Activated CD4-positive, alpha-beta T cell treated with anti-CD3 and anti-CD28 coated beads for 36 hours (primary cell): ENCODE measurements at regions of chr10 and their contacts with region 1.

Region 1: DNA sequence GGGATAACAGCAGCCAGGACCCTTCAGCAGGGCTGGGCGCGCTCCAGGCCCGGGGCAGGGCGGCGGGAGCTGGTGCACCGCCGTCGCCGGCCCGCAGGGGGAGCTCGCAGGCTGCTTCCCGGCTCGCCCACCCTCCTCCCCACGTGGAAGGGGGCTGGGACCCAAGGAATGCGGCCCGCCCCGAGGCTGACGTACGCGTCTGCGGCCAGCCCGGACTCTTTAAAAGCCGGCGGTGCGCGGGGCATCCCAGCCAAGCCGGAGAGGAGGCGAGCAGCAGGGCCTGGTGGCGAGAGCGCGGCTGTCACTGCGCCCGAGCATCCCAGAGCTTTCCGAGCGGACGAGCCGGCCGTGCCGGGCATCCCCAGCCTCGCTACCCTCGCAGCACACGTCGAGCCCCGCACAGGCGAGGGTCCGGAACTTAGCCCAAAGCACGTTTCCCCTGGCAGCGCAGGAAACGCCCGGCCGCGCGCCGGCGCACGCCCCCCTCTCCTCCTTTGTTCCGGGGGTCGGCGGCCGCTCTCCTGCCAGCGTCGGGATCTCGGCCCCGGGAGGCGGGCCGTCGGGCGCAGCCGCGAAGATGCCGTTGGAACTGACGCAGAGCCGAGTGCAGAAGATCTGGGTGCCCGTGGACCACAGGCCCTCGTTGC is at the start of gene PFKFB3:
- DNase-seq: peak; percentile 98
- ATAC-seq: peak; percentile 64
- H3K4me3 Mint-ChIP-seq: peak within 1 kb of the TSS; percentile 89
- H3K27ac Mint-ChIP-seq: peak within 1 kb of the TSS; percentile 95
- H3K4me1 Mint-ChIP-seq: peaks cover 43% of the 10 kb centered on the region
- H3K27me3 Mint-ChIP-seq: no peaks in the 10 kb centered on the region
- total RNA-seq, gene PFKFB3: 133 to 183 TPM

Region 2: DNA sequence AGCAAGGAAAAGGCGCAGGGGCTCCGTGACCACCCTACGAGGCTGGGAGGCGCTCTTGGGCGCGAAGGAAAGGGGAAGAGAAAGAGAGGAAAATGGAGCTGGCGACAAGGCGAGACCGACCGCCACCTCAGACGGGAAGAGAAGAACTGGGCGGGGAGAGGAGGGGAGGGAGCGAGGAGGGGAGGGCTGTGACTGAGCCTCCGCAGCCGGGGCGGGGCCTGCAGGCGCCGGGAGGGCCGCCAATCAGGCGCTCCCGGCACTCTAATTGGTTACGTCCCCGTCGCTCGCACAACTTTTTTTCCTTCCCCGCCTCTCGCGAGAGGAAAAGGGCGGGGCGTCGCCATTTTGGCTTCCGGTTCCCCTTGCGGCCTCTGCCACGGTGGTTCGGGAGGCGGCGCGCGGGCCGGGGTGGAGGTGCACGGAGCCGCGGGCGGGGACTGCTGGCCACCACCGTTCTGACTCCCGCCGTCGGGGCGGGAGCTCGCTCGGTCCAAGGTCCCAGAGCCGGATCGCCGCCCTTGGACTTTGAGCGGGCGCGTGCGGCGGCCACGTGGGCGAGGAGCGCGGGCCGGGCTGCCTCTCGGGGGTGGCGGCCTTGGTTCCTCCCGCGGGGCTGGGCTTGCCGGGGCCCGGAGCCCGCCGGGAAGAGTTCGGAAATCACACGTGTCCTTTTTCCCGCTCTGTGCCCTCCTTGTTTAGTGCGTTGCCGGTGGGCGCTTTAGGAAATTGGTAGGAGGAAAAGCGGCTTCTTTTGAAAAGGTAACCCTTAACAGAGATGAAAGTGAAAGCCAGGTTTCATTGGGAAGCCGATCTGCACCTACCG is 389.3 kb before region 1 on chr10 and contains the start of gene GDI2:
- CTCF ChIA-PET with region 1: no interaction called
- POLR2A ChIA-PET with region 1: no interaction called
- intact Hi-C with region 1: loop called in 1 of 2 experiments (anchors 2 kb)
- DNase-seq: peak; percentile 98
- ATAC-seq: peak; percentile 94
- H3K4me3 Mint-ChIP-seq: peak within 1 kb of the TSS; percentile 92
- H3K27ac Mint-ChIP-seq: peak within 1 kb of the TSS; percentile 98
- H3K4me1 Mint-ChIP-seq: peaks cover 60% of the 10 kb centered on the region
- H3K27me3 Mint-ChIP-seq: no peaks in the 10 kb centered on the region
- total RNA-seq, gene GDI2: 276 to 290 TPM

Region 3: GRCh38 chr10:6088721-6089390 is 114.0 kb before region 1 on chr10 and contains the start of gene RBM17:
- CTCF ChIA-PET with region 1: interaction called, 9 read pairs
- POLR2A ChIA-PET with region 1: interaction called, 3 read pairs
- intact Hi-C with region 1: loop called (anchors 1 to 5 kb)
- DNase-seq: peak; percentile 98
- ATAC-seq: peak; percentile 70
- H3K4me3 Mint-ChIP-seq: peak within 1 kb of the TSS; percentile 90
- H3K27ac Mint-ChIP-seq: peak within 1 kb of the TSS; percentile 78
- H3K4me1 Mint-ChIP-seq: peaks cover 73% of the 10 kb centered on the region
- H3K27me3 Mint-ChIP-seq: no peaks in the 10 kb centered on the region
- total RNA-seq, gene RBM17: 206 to 246 TPM

Region 4: GRCh38 chr10:6144406-6145165 is 58.2 kb before region 1 on chr10:
- CTCF ChIA-PET with region 1: interaction called, 8 read pairs
- POLR2A ChIA-PET with region 1: no interaction called
- intact Hi-C with region 1: loop called in 1 of 2 experiments (anchors 1 kb)
- DNase-seq: peak; percentile 94
- ATAC-seq: peak; percentile 71
- H3K4me3 Mint-ChIP-seq: peak overlapping the region; percentile 81
- H3K27ac Mint-ChIP-seq: peak overlapping the region; percentile 90
- H3K4me1 Mint-ChIP-seq: peaks cover 79% of the 10 kb centered on the region
- H3K27me3 Mint-ChIP-seq: no peaks in the 10 kb centered on the region

Region 5: DNA sequence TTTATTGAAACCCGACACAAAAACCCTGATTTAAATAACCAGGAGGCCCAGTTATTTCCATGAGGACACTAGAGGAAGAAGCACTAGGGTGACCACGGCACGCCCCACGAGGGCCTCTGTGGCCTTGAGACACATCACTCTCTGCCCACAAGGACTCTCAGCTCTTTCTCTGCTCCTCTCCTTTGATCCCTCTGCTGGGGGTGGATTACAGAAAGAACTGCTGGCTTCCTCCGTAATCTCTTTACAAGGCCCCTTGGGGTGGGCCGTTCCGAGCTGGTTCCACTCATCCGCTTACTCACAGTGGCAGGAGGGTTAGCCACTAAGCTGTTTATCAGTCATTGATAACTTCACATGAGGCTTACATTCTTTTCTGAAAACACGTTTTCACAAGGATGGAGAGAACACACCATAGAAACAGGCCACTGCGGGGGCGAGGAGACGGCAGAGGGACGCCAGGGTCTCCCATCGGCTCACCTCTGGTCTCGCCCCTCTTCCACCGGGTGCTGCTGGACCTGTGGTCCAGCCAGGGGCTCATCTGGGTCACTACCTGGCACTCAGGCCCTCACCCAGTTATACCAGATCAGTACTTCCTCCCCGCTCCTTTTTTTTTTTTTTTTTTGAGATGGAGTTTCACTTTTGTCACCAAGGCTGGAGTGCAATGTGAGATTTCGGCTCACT is 17.6 kb before region 1 on chr10:
- CTCF ChIA-PET with region 1: interaction called, 13 read pairs
- POLR2A ChIA-PET with region 1: interaction called, 5 read pairs
- intact Hi-C with region 1: loop called in 1 of 2 experiments (anchors 1 kb)
- DNase-seq: peak; percentile 57
- ATAC-seq: peak; percentile 52
- H3K4me3 Mint-ChIP-seq: no peak overlapping the region
- H3K27ac Mint-ChIP-seq: peak overlapping the region; percentile 61
- H3K4me1 Mint-ChIP-seq: peaks cover 50% of the 10 kb centered on the region
- H3K27me3 Mint-ChIP-seq: no peaks in the 10 kb centered on the region

Region 6: DNA sequence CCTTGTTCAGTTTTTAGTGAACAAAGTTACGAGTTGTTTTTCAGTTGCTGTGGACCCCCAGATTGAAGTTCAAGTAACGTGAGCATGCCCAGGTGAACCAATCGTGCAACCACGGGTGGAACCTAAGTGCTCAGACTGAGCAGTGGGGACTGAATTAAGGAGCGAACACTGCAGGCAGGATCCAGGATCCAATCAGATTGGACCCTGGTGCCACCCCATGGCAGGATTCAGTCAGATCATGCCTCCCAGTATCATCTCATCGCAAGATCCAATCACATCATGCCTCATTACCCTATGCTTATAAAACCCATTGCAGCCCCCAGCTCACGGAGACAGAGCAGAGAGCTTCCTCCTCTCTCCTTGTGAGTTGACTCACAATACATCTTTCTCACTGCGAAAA is 80.8 kb after region 1 on chr10:
- CTCF ChIA-PET with region 1: no interaction called
- POLR2A ChIA-PET with region 1: no interaction called
- intact Hi-C with region 1: no loop called
- DNase-seq: no peak
- ATAC-seq: no peak
- H3K4me3 Mint-ChIP-seq: no peak overlapping the region
- H3K27ac Mint-ChIP-seq: no peak overlapping the region
- H3K4me1 Mint-ChIP-seq: peaks cover 13% of the 10 kb centered on the region
- H3K27me3 Mint-ChIP-seq: no peaks in the 10 kb centered on the region

Region 7: GRCh38 chr10:6348096-6348874 is 145.5 kb after region 1 on chr10:
- CTCF ChIA-PET with region 1: interaction called, 13 read pairs
- POLR2A ChIA-PET with region 1: interaction called, 7 read pairs
- intact Hi-C with region 1: loop called (anchors 1 to 10 kb)
- DNase-seq: peak; percentile 94
- ATAC-seq: peak; percentile 91
- H3K4me3 Mint-ChIP-seq: peak overlapping the region; percentile 65
- H3K27ac Mint-ChIP-seq: peak overlapping the region; percentile 98
- H3K4me1 Mint-ChIP-seq: peaks cover 62% of the 10 kb centered on the region
- H3K27me3 Mint-ChIP-seq: no peaks in the 10 kb centered on the region

Region 8: GRCh38 chr10:6498771-6499170 is 296.0 kb after region 1 on chr10:
- CTCF ChIA-PET with region 1: no interaction called
- POLR2A ChIA-PET with region 1: no interaction called
- intact Hi-C with region 1: loop called in 1 of 2 experiments (anchors 5 kb)
- DNase-seq: peak; percentile 47
- ATAC-seq: peak; percentile 79
- H3K4me3 Mint-ChIP-seq: peak overlapping the region; percentile 46
- H3K27ac Mint-ChIP-seq: peak overlapping the region; percentile 89
- H3K4me1 Mint-ChIP-seq: peaks cover 52% of the 10 kb centered on the region
- H3K27me3 Mint-ChIP-seq: no peaks in the 10 kb centered on the region